ENCODE measurements at regions of chr11 and their contacts with region 1.

Region 1: DNA sequence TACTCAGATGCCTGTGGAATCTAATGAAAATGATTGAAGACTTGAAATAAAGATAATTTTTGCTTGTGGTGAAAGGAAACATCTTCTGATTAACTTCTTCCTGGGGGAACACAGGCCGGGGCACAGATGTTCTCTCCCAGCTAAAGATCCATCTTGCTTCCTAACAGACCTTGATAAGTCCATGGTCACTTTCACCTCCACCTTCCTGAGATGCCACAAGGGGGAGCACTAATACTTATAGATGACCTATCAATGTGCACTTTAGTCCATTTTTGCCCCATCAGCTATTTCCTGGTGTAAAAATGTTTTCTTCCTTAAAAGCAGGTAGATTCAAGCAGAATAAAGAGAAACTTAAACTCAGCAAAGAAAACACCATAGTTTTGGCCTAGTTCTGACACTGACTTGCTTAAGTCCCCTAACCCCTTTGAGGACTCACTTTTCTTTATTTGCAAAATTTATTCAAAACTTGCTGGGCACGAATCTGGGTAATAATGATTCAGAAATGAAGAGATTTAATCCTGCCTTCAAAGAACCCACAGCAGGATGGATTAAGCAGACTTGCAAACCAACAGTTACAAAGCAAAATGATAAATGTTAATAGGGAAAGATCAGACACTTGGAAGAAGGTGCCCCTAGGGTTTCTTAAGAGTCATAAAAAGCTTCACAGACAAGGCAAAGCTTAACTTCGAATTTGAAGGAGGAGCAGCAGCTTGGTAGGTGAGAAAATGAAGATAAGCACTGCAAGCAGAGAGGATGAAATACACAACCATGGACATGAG is 158.7 kb downstream of the RAB38 start:
- DNase-seq: peak; percentile 83
- H3K4me3 Mint-ChIP-seq: no peak overlapping the region
- H3K27ac Mint-ChIP-seq: peak overlapping the region; percentile 43
- H3K4me1 Mint-ChIP-seq: peaks cover 6% of the 10 kb centered on the region
- H3K27me3 Mint-ChIP-seq: no peaks in the 10 kb centered on the region
- CTCF ChIP-seq: peak; percentile 68

Region 2: DNA sequence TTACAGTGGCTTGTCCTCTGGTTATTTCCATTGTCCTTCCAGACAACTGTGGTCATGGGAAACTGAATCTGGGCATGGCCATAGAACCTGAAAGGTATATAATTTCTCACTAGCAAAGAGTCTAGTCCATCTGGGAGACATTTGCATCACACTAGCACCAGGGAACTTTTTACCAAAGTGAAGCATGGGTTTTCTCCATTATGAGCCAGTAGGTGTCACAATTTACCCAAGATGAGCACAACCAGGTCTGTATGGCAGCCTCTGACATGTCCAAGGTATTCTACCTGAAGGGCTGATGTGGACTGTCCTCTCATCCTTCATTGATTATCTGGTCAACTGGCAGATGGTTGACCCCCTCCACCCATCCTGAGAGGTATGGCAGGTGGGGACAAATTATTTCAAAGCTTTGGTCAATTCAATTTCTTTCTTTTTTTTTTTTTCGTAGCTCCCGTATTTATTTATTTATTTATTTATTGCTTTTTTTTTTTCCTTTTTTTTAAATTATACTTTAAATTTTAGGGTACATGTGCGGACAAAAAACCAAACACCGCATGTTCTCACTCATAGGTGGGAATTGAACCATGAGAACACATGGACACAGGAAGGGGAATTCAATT is 553.0 kb before region 1 on chr11:
- CTCF ChIA-PET with region 1: interaction called, 3 read pairs
- POLR2A ChIA-PET with region 1: no interaction called
- intact Hi-C with region 1: loop called (anchors 1 kb)
- DNase-seq: peak; percentile 65
- H3K4me3 Mint-ChIP-seq: no peak overlapping the region
- H3K27ac Mint-ChIP-seq: no peak overlapping the region
- H3K4me1 Mint-ChIP-seq: no peaks in the 10 kb centered on the region
- H3K27me3 Mint-ChIP-seq: no peaks in the 10 kb centered on the region
- CTCF ChIP-seq: peak; percentile 61

Region 3: DNA sequence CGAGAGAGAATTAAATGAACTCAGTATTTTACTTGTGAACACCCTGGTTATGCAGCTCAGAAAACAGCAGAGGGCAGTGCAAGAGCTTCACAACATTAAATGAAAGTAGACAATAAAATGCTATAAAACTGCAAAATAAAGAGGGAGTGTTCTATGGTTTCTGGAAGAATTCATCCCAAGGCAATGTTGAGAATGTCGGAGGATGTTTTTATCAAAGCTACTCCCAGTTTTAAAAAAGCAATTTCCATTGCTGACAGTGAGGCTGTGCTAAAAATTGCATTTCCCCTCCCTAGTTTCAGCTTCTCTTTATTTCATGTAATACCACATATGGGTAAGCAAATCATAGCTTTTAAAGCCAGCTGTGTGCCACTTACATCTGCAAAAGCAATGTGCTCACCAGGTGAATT is 138.2 kb before region 1 on chr11:
- CTCF ChIA-PET with region 1: interaction called, 18 read pairs
- POLR2A ChIA-PET with region 1: no interaction called
- intact Hi-C with region 1: loop called (anchors 1 kb)
- DNase-seq: peak; percentile 57
- H3K4me3 Mint-ChIP-seq: no peak overlapping the region
- H3K27ac Mint-ChIP-seq: no peak overlapping the region
- H3K4me1 Mint-ChIP-seq: peaks cover 6% of the 10 kb centered on the region
- H3K27me3 Mint-ChIP-seq: no peaks in the 10 kb centered on the region
- CTCF ChIP-seq: peak; percentile 56

Region 4: GRCh38 chr11:88051396-88051795 is 34.8 kb after region 1 on chr11:
- CTCF ChIA-PET with region 1: interaction called, 11 read pairs
- POLR2A ChIA-PET with region 1: no interaction called
- intact Hi-C with region 1: no loop called
- DNase-seq: peak; percentile 66
- H3K4me3 Mint-ChIP-seq: no peak overlapping the region
- H3K27ac Mint-ChIP-seq: no peak overlapping the region
- H3K4me1 Mint-ChIP-seq: peaks cover 5% of the 10 kb centered on the region
- H3K27me3 Mint-ChIP-seq: no peaks in the 10 kb centered on the region
- CTCF ChIP-seq: no peak

Region 5: GRCh38 chr11:88231894-88232482 is 215.4 kb after region 1 on chr11:
- CTCF ChIA-PET with region 1: interaction called, 32 read pairs
- POLR2A ChIA-PET with region 1: no interaction called
- intact Hi-C with region 1: no loop called
- DNase-seq: peak; percentile 59
- H3K4me3 Mint-ChIP-seq: no peak overlapping the region
- H3K27ac Mint-ChIP-seq: no peak overlapping the region
- H3K4me1 Mint-ChIP-seq: peaks cover 5% of the 10 kb centered on the region
- H3K27me3 Mint-ChIP-seq: no peaks in the 10 kb centered on the region
- CTCF ChIP-seq: peak; percentile 53

Region 6: DNA sequence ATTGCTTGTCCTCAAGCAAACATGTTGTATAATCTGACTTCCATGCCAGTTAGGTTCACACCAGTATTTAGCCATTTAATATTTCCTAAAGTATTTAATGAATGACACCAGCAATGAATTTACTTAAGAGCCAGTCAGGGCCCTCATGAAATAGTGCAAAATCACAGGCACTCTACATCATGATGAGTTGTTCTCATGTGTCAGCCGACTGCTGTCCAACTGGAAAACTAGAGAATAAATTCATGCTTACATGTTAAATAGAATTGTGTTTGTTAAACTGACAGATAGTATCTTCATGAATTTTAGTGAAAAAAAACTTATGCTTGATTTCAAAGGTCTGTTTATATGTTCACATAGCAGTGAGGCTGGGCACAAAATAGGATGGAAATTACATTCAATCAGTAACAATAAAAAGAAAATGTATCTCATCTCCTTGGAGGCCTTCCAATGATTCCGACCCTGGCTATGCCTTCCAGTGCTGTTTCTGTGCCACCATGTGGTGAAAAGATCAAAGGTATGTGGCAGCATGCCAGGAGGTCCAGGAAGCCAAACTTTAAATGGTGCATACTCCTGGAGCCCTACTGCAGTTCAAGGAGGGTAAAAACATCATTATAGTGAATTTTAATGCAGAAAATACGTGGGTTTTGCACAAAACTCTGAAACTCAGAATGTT is 275.7 kb after region 1 on chr11:
- CTCF ChIA-PET with region 1: interaction called, 29 read pairs
- POLR2A ChIA-PET with region 1: no interaction called
- intact Hi-C with region 1: no loop called
- DNase-seq: peak; percentile 83
- H3K4me3 Mint-ChIP-seq: no peak overlapping the region
- H3K27ac Mint-ChIP-seq: no peak overlapping the region
- H3K4me1 Mint-ChIP-seq: peaks cover 5% of the 10 kb centered on the region
- H3K27me3 Mint-ChIP-seq: no peaks in the 10 kb centered on the region
- CTCF ChIP-seq: peak; percentile 16

Measured in MCF 10A (cell line).